A549 (cell line): ENCODE measurements at regions of chr15 and their contacts with region 1.

Region 1: DNA sequence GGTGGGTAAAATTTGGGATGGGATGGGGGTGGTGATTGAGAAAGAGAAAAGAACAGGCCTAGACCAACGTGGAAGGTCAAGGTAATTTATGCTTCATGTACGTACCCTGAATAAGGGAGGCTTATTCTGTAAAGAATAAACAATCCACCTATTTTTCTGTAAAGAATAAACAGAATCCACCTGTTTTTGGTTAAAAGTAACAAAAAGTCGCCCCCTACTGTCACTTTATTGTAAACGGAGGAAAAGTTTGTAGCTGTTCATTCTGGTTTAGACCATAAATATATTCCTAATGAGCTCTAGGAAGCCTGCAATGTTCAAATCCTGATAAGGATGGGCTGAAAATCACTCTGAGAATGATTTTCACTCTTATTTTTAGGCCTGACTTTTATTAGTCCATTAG is 23.5 kb upstream of the SQOR start:
- DNase-seq: peak in 1 of 2 experiments; percentile 29
- ATAC-seq: peak in 1 of 2 experiments; percentile 49; a peak in 3 of 6 replicates
- H3K4me3 ChIP-seq: no peak overlapping the region
- H3K27ac ChIP-seq: no peak overlapping the region
- H3K4me1 ChIP-seq: peaks cover 4% of the 10 kb centered on the region; the same call in 2 of the 3 replicates
- CTCF ChIP-seq: peak; percentile 59
- EP300 ChIP-seq: no peak
- POLR2A ChIP-seq: no peak
- RAD21 ChIP-seq: peak; percentile 53 to 58; a peak in 4 of 5 replicates

Region 2: GRCh38 chr15:45429974-45430792 is 181.1 kb before region 1 on chr15:
- CTCF ChIA-PET with region 1: interaction called, 29 read pairs
- POLR2A ChIA-PET with region 1: no interaction called
- DNase-seq: peak; percentile 34 to 49
- ATAC-seq: peak; percentile 93 to 96
- H3K4me3 ChIP-seq: peak overlapping the region; percentile 58
- H3K27ac ChIP-seq: peak overlapping the region; percentile 57 to 83; a peak in 5 of 6 replicates
- H3K4me1 ChIP-seq: 0 out of 3 replicates have a peak, but pooled peaks cover 4% of the 10 kb centered on the region
- CTCF ChIP-seq: peak; percentile 99
- EP300 ChIP-seq: no peak
- POLR2A ChIP-seq: no peak
- RAD21 ChIP-seq: peak; percentile 77 to 97

Region 3: GRCh38 chr15:45587095-45587860 is 24.0 kb before region 1 on chr15 and contains the start of gene BLOC1S6:
- CTCF ChIA-PET with region 1: interaction called, 11 read pairs
- POLR2A ChIA-PET with region 1: interaction called, 3 read pairs
- DNase-seq: peak; percentile 50 to 90
- ATAC-seq: peak; percentile 90 to 94
- H3K4me3 ChIP-seq: peak within 1 kb of the TSS; percentile 75
- H3K27ac ChIP-seq: peak within 1 kb of the TSS; percentile 95 to 98
- H3K4me1 ChIP-seq: peaks cover 23% of the 10 kb centered on the region; the same call in 2 of the 3 replicates
- CTCF ChIP-seq: no peak
- EP300 ChIP-seq: no peak
- POLR2A ChIP-seq: peak; percentile 72
- RAD21 ChIP-seq: no peak
- polyA plus RNA-seq, gene BLOC1S6: 14.2 and 19.0 TPM in 2 replicates

Region 4: GRCh38 chr15:45594319-45594718 is 17.0 kb before region 1 on chr15:
- CTCF ChIA-PET with region 1: interaction called, 11 read pairs
- POLR2A ChIA-PET with region 1: interaction called, 3 read pairs
- DNase-seq: no peak
- ATAC-seq: no peak
- H3K4me3 ChIP-seq: no peak overlapping the region
- H3K27ac ChIP-seq: no peak overlapping the region
- H3K4me1 ChIP-seq: peaks cover 6% of the 10 kb centered on the region; the same call in 2 of the 3 replicates
- CTCF ChIP-seq: no peak
- EP300 ChIP-seq: no peak
- POLR2A ChIP-seq: no peak
- RAD21 ChIP-seq: no peak

Region 5: GRCh38 chr15:45641374-45641781 is 30.1 kb after region 1 on chr15:
- CTCF ChIA-PET with region 1: interaction called, 14 read pairs
- POLR2A ChIA-PET with region 1: no interaction called
- DNase-seq: peak; percentile 81 to 93
- ATAC-seq: peak; percentile 89 to 91
- H3K4me3 ChIP-seq: peak overlapping the region; percentile 29; the same call in 2 of the 3 replicates
- H3K27ac ChIP-seq: peak overlapping the region; percentile 94 to 96
- H3K4me1 ChIP-seq: peaks cover 90% of the 10 kb centered on the region
- CTCF ChIP-seq: no peak
- EP300 ChIP-seq: peak; percentile 84 to 94; a peak in 3 of 5 replicates
- POLR2A ChIP-seq: no peak
- RAD21 ChIP-seq: 0 out of 5 replicates have a peak, but pooled peaks of 1 of the 2 experiments have one; percentile 34